ENCODE measurements at regions of chr13 and their contacts with region 1.

Region 1: GRCh38 chr13:42271337-42272114 is 426 bp upstream of the AKAP11 start:
- DNase-seq: peak; percentile 95
- ATAC-seq: peak; percentile 87
- H3K4me3 Mint-ChIP-seq: peak overlapping the region; percentile 99
- H3K27ac Mint-ChIP-seq: peak overlapping the region; percentile 93
- H3K4me1 Mint-ChIP-seq: peaks cover 48% of the 10 kb centered on the region
- H3K27me3 Mint-ChIP-seq: no peaks in the 10 kb centered on the region

Region 2: GRCh38 chr13:41132512-41133152 is 1138.9 kb before region 1 on chr13 and contains the start of gene KBTBD6:
- CTCF ChIA-PET with region 1: interaction called, 3 read pairs
- POLR2A ChIA-PET with region 1: no interaction called
- intact Hi-C with region 1: loop called in 1 of 2 experiments (anchors 2 kb)
- DNase-seq: peak; percentile 98
- ATAC-seq: peak; percentile 95
- H3K4me3 Mint-ChIP-seq: peak within 1 kb of the TSS; percentile 92
- H3K27ac Mint-ChIP-seq: peak within 1 kb of the TSS; percentile 93
- H3K4me1 Mint-ChIP-seq: peaks cover 46% of the 10 kb centered on the region
- H3K27me3 Mint-ChIP-seq: no peaks in the 10 kb centered on the region
- total RNA-seq, gene KBTBD6: 3.4 to 4.4 TPM

Region 3: DNA sequence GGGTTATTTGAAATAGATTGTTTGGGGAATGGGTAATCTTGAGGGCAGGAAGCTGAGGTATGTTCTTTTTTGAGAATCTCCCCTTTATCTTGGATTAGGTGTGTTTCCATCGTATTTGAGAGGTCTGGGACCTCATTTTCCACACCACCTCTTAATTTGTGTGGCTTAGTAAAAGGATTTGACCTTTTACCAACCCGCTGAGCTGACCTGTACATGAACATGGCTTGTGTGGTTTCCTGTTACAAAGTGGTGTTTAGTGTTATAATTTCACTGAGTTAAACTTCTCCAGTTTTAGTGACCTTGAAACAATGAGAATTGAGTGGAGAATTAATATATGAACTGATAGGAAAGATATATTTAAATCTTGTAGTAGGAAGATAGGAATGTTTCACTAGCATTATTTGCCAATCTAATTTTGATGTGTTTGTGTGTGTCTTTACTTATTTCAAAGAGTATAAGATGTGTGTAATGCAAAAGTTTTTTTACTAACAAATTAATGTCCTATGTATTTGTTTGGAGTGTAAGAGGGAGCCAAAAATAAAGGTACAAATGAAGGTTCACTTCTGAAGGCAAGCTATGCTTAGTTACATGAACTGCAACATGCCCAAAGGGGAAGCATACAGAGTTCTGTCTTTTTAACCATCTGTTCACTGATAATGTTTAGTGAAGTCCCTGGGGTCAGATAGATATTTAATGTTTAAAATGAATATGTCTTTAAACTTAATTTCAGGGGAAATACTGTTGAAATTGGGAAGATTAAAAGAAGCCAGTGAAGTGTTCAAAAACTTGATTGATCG is 943.3 kb before region 1 on chr13:
- CTCF ChIA-PET with region 1: no interaction called
- POLR2A ChIA-PET with region 1: no interaction called
- intact Hi-C with region 1: no loop called
- DNase-seq: no peak
- ATAC-seq: no peak
- H3K4me3 Mint-ChIP-seq: no peak overlapping the region
- H3K27ac Mint-ChIP-seq: peak overlapping the region; percentile 26
- H3K4me1 Mint-ChIP-seq: peaks cover 30% of the 10 kb centered on the region
- H3K27me3 Mint-ChIP-seq: no peaks in the 10 kb centered on the region

Region 4: DNA sequence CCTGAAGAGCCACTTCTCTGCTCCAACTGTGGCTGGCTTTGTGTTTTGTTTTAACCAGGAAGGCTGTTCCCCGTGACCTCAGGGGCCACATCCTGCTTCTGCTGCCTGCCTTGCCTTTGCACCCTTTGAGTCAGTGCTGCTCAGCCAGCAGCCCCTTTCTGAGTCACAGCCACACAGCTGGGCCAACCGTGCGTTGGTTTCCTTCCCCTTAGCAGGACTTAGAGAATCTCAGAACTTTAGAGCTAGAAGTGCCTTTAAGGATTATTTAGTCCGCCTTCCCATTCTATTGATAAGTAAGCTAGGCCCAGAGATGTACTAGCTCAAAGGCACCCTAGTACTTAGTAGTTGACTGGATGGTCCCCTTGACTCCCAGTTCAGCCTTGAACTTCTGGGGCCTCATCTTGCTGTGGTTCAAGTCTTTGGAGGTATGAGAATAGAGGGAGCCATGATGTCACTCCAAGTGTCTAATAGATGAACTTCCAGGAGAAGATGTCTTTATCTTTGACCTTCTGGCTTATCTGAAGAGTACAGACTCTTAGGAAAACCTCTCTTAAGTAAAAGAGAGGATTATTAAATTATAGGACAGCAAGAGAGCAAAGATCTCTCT is 806.2 kb before region 1 on chr13:
- CTCF ChIA-PET with region 1: no interaction called
- POLR2A ChIA-PET with region 1: no interaction called
- intact Hi-C with region 1: loop called in 1 of 2 experiments (anchors 10 kb)
- DNase-seq: peak; percentile 95
- ATAC-seq: peak; percentile 84
- H3K4me3 Mint-ChIP-seq: peak overlapping the region; percentile 82
- H3K27ac Mint-ChIP-seq: peak overlapping the region; percentile 98
- H3K4me1 Mint-ChIP-seq: peaks cover 91% of the 10 kb centered on the region
- H3K27me3 Mint-ChIP-seq: no peaks in the 10 kb centered on the region

Region 5: DNA sequence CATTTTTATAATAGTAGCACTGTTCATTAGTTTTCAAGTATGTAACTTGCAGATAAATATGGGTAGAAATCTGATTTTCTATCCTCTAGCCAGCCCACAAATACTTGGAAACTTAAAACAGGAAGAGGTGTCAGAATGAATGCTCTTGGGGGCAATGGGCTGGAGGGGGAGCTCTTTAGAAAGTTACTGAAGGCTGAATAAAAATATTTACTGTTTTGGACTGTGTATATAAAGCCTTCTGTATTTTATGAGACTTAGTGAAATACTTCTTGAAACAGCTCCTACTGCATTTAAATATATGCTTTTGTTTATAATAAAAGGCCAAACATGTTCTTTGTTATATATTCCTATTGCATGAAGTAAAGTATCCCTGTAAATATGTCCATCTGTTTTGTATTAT is 675.3 kb before region 1 on chr13:
- CTCF ChIA-PET with region 1: no interaction called
- POLR2A ChIA-PET with region 1: no interaction called
- intact Hi-C with region 1: no loop called
- DNase-seq: no peak
- ATAC-seq: no peak
- H3K4me3 Mint-ChIP-seq: no peak overlapping the region
- H3K27ac Mint-ChIP-seq: no peak overlapping the region
- H3K4me1 Mint-ChIP-seq: peaks cover 7% of the 10 kb centered on the region
- H3K27me3 Mint-ChIP-seq: no peaks in the 10 kb centered on the region

Region 6: DNA sequence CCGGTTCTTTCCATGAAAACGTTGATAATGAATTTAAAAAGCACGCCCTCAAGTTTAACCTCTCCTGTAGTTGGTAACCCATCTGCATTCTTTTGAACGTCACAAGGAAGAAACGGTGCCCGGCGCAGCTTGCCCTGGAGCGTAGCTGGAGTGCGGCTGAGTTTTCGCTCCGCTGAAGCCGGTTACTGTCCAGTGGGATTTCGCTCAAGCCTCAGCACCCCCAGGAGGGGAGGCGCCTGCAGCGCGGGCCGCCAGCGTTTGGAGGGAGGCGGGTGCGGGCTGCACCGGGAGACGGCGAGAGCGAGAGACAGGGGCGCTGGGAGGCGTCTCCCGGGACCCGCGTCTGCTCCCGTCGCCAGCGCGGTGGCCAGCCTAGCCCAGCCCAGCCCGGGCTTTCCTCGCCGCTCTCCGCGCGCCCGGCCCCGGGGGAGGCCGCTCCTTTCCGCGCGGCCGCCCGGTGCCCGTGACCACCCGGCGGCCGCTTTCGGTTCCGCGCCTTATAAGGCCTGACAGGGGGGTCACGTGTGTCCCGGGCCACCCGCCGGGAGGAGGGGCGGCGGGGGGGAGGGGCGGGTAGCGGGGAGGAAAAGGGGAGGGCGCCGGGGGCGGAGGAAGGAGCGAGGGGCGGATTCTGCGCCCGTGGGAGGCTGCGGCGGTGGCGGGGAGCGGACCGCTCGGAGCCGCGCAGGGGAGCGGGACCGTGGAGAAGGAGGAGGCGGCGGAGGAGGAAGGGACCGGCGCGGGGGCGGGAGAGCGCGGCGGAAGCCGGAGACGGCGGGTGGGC is 231.4 kb before region 1 on chr13:
- CTCF ChIA-PET with region 1: no interaction called
- POLR2A ChIA-PET with region 1: no interaction called
- intact Hi-C with region 1: loop called (anchors 2 to 10 kb)
- DNase-seq: peak; percentile 92
- ATAC-seq: peak; percentile 77
- H3K4me3 Mint-ChIP-seq: peak overlapping the region; percentile 74
- H3K27ac Mint-ChIP-seq: peak overlapping the region; percentile 76
- H3K4me1 Mint-ChIP-seq: peaks cover 23% of the 10 kb centered on the region
- H3K27me3 Mint-ChIP-seq: peaks cover 5% of the 10 kb centered on the region

Region 7: GRCh38 chr13:42377640-42378382 is 106.3 kb after region 1 on chr13:
- CTCF ChIA-PET with region 1: interaction called, 5 read pairs
- POLR2A ChIA-PET with region 1: no interaction called
- intact Hi-C with region 1: loop called (anchors 1 to 5 kb)
- DNase-seq: peak; percentile 60
- ATAC-seq: peak; percentile 83
- H3K4me3 Mint-ChIP-seq: no peak overlapping the region
- H3K27ac Mint-ChIP-seq: peak overlapping the region; percentile 97
- H3K4me1 Mint-ChIP-seq: peaks cover 74% of the 10 kb centered on the region
- H3K27me3 Mint-ChIP-seq: no peaks in the 10 kb centered on the region

Region 8: GRCh38 chr13:42574435-42575311 is 303.1 kb after region 1 on chr13:
- CTCF ChIA-PET with region 1: no interaction called
- POLR2A ChIA-PET with region 1: no interaction called
- intact Hi-C with region 1: loop called (anchors 2 to 5 kb)
- DNase-seq: peak; percentile 82
- ATAC-seq: peak; percentile 82
- H3K4me3 Mint-ChIP-seq: peak overlapping the region; percentile 77
- H3K27ac Mint-ChIP-seq: peak overlapping the region; percentile 86
- H3K4me1 Mint-ChIP-seq: peaks cover 41% of the 10 kb centered on the region
- H3K27me3 Mint-ChIP-seq: peaks cover 34% of the 10 kb centered on the region

Region 9: DNA sequence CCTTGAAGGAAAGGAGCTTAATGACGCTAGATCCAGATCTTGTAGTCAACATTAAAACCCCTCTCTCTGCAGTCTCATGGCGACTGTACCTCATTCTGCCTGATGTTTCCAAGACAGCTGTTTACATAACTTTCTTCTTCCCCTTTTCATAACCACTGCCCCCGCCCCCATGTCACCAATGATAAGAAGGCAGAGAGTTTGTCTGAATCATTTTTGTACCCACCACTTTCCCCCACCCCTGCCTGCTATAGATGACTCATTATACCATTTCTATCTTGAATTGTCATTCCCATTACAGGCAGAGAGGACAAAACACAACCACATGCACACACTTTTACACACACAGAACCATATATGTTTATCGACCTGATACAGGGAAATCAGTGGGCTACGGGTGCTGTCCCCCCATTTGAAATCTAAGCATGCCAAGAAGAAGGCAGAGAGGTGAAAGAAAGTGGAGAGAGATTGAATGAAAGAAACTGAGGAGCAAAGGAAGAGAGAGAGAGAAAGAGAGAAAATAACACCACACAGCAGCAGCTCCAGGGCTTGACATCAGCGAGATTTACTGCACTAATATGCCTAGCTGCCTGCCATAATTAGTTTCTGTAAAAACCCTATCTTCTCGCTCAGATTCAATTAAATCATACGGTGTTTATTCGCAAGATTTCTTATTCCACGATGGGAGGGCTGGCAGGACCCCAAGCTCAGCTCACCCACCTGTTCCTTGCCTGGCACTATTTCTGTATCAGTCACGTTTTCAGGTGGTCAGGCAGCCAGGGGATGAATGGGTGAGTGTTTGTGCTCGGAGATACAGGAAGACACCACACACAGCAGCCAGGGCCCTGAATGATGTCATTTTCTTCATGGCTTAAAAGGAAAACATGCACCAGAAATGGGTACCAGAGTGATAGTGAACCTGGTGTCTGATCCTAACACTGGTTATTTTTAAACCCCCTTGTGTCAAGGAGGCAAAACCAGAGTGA is 1987.8 kb after region 1 on chr13:
- CTCF ChIA-PET with region 1: no interaction called
- POLR2A ChIA-PET with region 1: no interaction called
- intact Hi-C with region 1: loop called in 1 of 2 experiments (anchors 10 kb)
- DNase-seq: peak; percentile 90
- ATAC-seq: peak; percentile 87
- H3K4me3 Mint-ChIP-seq: peak overlapping the region; percentile 62
- H3K27ac Mint-ChIP-seq: peak overlapping the region; percentile 94
- H3K4me1 Mint-ChIP-seq: peaks cover 21% of the 10 kb centered on the region
- H3K27me3 Mint-ChIP-seq: peaks cover 5% of the 10 kb centered on the region